ENCODE measurements at regions of chr2 and their contacts with region 1.

Region 1: DNA sequence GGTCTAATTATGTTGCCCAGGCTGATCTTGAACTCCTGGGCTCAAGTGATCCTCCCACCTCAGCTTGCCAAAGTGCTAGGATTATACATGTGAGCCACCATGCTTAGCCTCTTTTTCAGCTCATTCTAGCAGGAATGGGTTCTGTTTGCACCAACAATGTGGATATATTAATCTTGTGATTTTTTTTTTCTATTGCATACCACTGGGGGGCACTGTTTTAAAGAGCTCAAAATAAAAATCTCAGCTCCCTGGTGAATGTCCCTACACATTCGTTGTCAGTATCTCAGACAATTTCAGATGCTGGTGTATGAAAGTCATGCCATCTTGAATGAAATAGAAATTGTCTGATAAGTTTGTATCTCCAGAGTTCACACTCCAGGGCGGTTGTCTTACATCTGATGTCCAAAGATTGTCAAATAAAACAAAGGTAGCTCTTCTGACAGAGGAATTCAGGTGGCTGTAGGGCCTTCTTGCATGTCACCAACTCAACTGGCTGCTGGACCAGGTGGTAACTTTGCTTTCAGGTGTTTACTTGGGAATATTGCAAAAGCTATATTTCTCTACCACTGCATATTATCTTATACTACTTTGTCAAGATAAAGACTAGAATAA is 3.1 kb upstream of the MATN3 start:
- DNase-seq: peak; percentile 80
- H3K4me3 ChIP-seq: no peak overlapping the region
- H3K27ac ChIP-seq: no peak overlapping the region
- H3K4me1 ChIP-seq: peaks cover 0 to 16% of the 10 kb centered on the region in 2 experiments; a peak in 2 of 4 replicates
- H3K27me3 ChIP-seq: no peaks in the 10 kb centered on the region
- CTCF ChIP-seq: peak; percentile 84
- EP300 ChIP-seq: no peak
- RAD21 ChIP-seq: peak; percentile 93

Region 2: DNA sequence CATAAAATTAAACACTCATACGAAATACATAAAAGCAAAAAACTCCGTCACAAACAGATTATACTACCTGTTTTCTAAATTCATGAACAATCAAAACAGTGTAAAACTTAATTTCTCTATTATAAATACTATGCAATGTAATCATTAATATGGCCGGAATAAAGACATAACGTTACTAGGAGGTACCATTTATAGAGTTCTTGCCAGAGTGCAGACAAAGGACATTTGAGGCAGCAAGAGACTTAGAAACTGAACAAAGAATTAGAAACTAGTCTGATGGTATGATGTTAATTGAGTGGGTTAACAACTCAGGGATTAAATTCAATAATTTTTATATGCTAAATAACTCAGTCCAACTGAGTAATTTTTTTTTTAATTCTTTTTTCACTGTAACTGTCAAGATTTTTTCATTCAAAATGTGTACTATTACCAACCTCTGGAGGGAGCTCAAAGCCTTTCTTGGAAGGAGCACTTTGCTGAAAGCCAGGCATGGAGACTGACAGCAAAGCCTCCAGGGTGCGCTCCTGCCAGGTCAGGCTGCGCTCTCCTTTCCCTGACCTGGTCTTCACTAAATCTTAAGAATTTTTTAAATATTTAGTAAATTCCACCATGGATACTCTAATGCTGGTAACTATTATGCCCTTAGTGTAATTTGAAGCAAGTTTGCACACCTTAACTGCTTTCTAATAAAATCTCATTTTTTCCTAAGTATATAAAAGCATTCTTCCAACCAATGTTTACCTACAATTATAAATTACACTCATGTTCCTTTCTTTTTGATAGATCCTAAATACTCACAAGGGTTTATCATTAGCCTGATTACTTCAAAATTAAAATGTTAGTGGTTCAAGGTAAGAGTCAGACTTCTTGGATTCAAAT is 59.8 kb before region 1 on chr2:
- CTCF ChIA-PET with region 1: interaction called, 37 read pairs
- POLR2A ChIA-PET with region 1: no interaction called
- DNase-seq: peak; percentile 81
- H3K4me3 ChIP-seq: no peak overlapping the region
- H3K27ac ChIP-seq: peak overlapping the region in 1 of 2 experiments; percentile 22; a peak in 1 of 4 replicates
- H3K4me1 ChIP-seq: peaks cover 0 to 11% of the 10 kb centered on the region in 2 experiments; a peak in 2 of 4 replicates
- H3K27me3 ChIP-seq: no peaks in the 10 kb centered on the region
- CTCF ChIP-seq: peak; percentile 97
- EP300 ChIP-seq: no peak
- RAD21 ChIP-seq: peak; percentile 98

Region 3: DNA sequence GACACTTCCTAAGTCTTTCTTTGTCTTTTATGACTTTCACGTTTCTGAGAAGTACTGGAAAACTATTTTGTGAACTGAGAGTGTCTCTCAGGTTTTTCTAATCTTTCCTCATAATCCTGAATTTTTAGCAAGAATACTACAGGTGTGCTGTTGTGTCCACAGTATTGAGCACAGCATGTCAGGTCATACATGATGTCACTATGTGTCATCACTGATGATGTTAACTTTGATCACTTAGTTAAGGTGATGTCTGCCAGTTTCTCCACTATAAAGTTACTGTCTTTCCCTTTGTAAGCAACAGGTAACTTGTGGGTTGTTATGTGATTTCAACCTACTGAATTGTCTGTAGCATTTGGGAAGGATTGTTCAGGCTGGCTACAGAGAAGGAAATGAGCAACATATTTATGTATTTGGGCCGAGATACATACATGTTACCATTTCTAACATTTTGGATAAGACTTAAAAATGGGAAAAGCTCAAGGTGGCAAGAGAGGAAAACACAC is 14.2 kb before region 1 on chr2:
- CTCF ChIA-PET with region 1: interaction called, 25 read pairs
- POLR2A ChIA-PET with region 1: no interaction called
- DNase-seq: no peak
- H3K4me3 ChIP-seq: no peak overlapping the region
- H3K27ac ChIP-seq: no peak overlapping the region
- H3K4me1 ChIP-seq: peaks cover 0 to 13% of the 10 kb centered on the region in 2 experiments; a peak in 2 of 4 replicates
- H3K27me3 ChIP-seq: no peaks in the 10 kb centered on the region
- CTCF ChIP-seq: no peak
- EP300 ChIP-seq: no peak
- RAD21 ChIP-seq: no peak

Region 4: GRCh38 chr2:20051532-20052228 is 36.1 kb after region 1 on chr2 and contains the start of gene LAPTM4A:
- CTCF ChIA-PET with region 1: interaction called, 82 read pairs
- POLR2A ChIA-PET with region 1: interaction called, 3 read pairs
- DNase-seq: peak; percentile 98
- H3K4me3 ChIP-seq: peak within 1 kb of the TSS; percentile 72 to 99
- H3K27ac ChIP-seq: peak within 1 kb of the TSS; percentile 98 to 100
- H3K4me1 ChIP-seq: peaks cover 11 to 30% of the 10 kb centered on the region in 2 experiments; a peak in 3 of 4 replicates
- H3K27me3 ChIP-seq: no peaks in the 10 kb centered on the region
- CTCF ChIP-seq: no peak
- EP300 ChIP-seq: no peak; a peak in 1 of 4 replicates
- RAD21 ChIP-seq: peak; percentile 17; the same call in 1 of the 2 replicates
- polyA plus RNA-seq, gene LAPTM4A: 306 and 350 TPM in 2 replicates

Region 5: GRCh38 chr2:20077466-20077865 is 61.9 kb after region 1 on chr2:
- CTCF ChIA-PET with region 1: interaction called, 23 read pairs
- POLR2A ChIA-PET with region 1: no interaction called
- DNase-seq: no peak
- H3K4me3 ChIP-seq: no peak overlapping the region
- H3K27ac ChIP-seq: no peak overlapping the region
- H3K4me1 ChIP-seq: peaks cover 2 to 27% of the 10 kb centered on the region in 2 experiments
- H3K27me3 ChIP-seq: no peaks in the 10 kb centered on the region
- CTCF ChIP-seq: no peak
- EP300 ChIP-seq: no peak
- RAD21 ChIP-seq: no peak

Region 6: DNA sequence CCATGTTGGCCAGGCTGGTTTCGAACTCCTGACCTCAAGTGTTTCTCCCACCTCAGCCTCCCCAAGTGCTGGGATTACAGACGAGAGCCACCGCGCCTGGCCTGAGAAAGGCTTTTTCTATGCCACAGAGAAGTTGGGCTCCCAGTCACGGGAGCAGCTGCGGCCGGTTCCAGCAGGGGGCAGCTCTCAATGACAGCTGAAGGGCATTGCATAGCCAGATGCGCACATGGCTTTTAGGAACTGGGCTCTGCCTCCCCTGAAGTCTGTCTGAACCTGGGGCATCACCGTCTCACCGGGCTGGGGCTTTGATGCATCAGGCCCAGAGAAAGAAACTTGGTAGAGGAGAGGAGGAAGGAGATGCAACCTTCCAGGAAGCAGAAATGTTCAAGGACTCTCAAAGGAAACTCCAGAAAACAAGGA is 120.1 kb after region 1 on chr2:
- CTCF ChIA-PET with region 1: interaction called, 12 read pairs
- POLR2A ChIA-PET with region 1: no interaction called
- DNase-seq: peak; percentile 89
- H3K4me3 ChIP-seq: no peak overlapping the region; a peak in 1 of 4 replicates
- H3K27ac ChIP-seq: no peak overlapping the region
- H3K4me1 ChIP-seq: peaks cover 0 to 34% of the 10 kb centered on the region in 2 experiments; a peak in 1 of 4 replicates
- H3K27me3 ChIP-seq: no peaks in the 10 kb centered on the region
- CTCF ChIP-seq: peak; percentile 98
- EP300 ChIP-seq: no peak
- RAD21 ChIP-seq: peak; percentile 84

Measured in SK-N-SH (cell line).